ENCODE measurements at regions of chr14 and their contacts with region 1.

Region 1: GRCh38 chr14:102063091-102063802 is 23.6 kb downstream of the HSP90AA1 start:
- DNase-seq: peak; percentile 80 to 87 (median 86)
- ATAC-seq: peak; percentile 98
- H3K4me3 ChIP-seq: no peak overlapping the region
- H3K27ac ChIP-seq: peak overlapping the region; percentile 45
- H3K4me1 ChIP-seq: peaks cover 6 to 12% of the 10 kb centered on the region in 2 experiments; a peak in 3 of 5 replicates
- H3K27me3 ChIP-seq: no peaks in the 10 kb centered on the region
- CTCF ChIP-seq: peak; percentile 37 to 64 (median 63); a peak in 5 of 6 replicates
- EP300 ChIP-seq: no peak
- POLR2A ChIP-seq: no peak
- RAD21 ChIP-seq: peak; percentile 48 to 66

Region 2: DNA sequence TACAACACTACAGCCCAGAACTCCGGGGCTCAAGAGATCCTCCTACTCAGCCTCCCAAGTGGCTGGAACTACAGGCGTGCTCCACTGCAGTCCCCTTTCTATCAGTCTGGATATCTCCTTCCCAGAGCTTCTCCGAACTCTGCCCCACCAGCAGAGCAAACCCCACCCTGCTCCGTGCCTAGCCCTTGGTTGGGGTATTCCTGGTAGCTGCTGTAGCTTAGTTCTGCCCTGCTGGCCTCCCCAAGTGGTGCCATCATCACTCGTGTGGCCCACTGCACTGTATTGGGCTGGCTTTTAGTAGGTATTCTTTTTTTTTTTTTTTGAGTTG is 14.1 kb after region 1 on chr14:
- CTCF ChIA-PET with region 1: no interaction called
- POLR2A ChIA-PET with region 1: interaction called, 15 read pairs
- in situ Hi-C with region 1: no loop called
- intact Hi-C with region 1: no loop called
- DNase-seq: no peak
- ATAC-seq: peak; percentile 41
- H3K4me3 ChIP-seq: no peak overlapping the region
- H3K27ac ChIP-seq: no peak overlapping the region
- H3K4me1 ChIP-seq: no peaks in the 10 kb centered on the region; a peak in 1 of 5 replicates
- H3K27me3 ChIP-seq: no peaks in the 10 kb centered on the region
- CTCF ChIP-seq: no peak
- EP300 ChIP-seq: no peak
- POLR2A ChIP-seq: no peak; the same call in none of the 2 replicates
- RAD21 ChIP-seq: no peak

Region 3: DNA sequence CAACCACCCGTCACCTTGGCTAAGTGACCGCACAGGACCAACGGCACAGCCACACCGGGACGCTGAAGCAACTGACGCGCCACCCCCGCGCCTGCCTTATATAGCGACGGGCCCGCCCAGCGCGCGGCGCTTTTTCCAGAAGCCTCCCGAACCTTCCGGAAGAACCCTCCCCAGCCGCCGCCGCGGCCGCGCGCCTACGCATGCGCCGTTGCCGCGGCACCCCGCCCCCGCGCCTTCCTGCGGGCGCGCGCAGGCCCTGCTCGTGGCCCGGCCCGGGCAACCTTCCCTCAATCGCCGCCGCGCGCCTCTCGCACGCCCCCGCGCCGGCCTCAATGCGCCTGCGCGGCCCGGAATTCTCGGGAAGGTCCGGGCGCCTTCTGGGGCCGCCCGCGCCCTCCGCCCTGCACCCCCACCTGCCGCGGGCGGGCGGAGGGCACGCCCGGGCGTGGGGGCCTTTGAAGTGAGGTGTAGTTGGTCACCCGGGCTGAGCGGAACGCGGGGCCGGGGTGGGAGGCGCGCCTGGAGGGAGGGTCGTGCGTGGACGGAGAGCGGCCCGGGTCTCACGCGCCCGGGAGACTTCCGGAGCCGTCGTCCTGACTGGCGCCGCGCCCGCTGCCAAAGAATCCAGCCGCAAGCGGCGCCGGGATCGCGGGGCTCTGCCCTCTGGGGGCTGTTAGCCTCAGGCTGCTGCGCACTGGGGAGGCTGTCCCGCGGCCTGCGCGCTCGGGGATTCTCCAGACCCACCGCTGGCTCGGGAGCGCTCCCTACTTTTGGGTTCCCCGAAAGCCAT is 23.9 kb after region 1 on chr14 and contains the start of gene HSP90AA1:
- CTCF ChIA-PET with region 1: no interaction called
- POLR2A ChIA-PET with region 1: interaction called, 17 read pairs
- in situ Hi-C with region 1: no loop called
- intact Hi-C with region 1: loop called (anchors 2 kb)
- DNase-seq: peak; percentile 86 to 94 (median 90)
- ATAC-seq: peak; percentile 81
- H3K4me3 ChIP-seq: peak within 1 kb of the TSS; percentile 89
- H3K27ac ChIP-seq: peak within 1 kb of the TSS; percentile 97
- H3K4me1 ChIP-seq: peaks cover 21 to 34% of the 10 kb centered on the region in 2 experiments; a peak in 4 of 5 replicates
- H3K27me3 ChIP-seq: no peaks in the 10 kb centered on the region
- CTCF ChIP-seq: peak in 2 of 3 experiments; percentile 12 to 14; a peak in 1 of 6 replicates
- EP300 ChIP-seq: peak; percentile 65
- POLR2A ChIP-seq: peak; percentile 98
- RAD21 ChIP-seq: no peak
- polyA plus RNA-seq, gene HSP90AA1: 787 to 1,003 TPM

Region 4: GRCh38 chr14:102096214-102097114 is 33.2 kb after region 1 on chr14:
- CTCF ChIA-PET with region 1: interaction called, 12 read pairs
- POLR2A ChIA-PET with region 1: no interaction called
- in situ Hi-C with region 1: no loop called
- intact Hi-C with region 1: loop called (anchors 1 kb)
- DNase-seq: peak; percentile 48 to 86 (median 60)
- ATAC-seq: peak; percentile 81
- H3K4me3 ChIP-seq: no peak overlapping the region
- H3K27ac ChIP-seq: peak overlapping the region; percentile 70; the same call in 2 of the 3 replicates
- H3K4me1 ChIP-seq: peaks cover 27 to 31% of the 10 kb centered on the region in 2 experiments
- H3K27me3 ChIP-seq: no peaks in the 10 kb centered on the region
- CTCF ChIP-seq: peak; percentile 79 to 90 (median 87)
- EP300 ChIP-seq: no peak
- POLR2A ChIP-seq: no peak
- RAD21 ChIP-seq: peak; percentile 75 to 84